AG04449 (cell line): ENCODE measurements at regions of chr1 and their contacts with region 1.

Region 1: DNA sequence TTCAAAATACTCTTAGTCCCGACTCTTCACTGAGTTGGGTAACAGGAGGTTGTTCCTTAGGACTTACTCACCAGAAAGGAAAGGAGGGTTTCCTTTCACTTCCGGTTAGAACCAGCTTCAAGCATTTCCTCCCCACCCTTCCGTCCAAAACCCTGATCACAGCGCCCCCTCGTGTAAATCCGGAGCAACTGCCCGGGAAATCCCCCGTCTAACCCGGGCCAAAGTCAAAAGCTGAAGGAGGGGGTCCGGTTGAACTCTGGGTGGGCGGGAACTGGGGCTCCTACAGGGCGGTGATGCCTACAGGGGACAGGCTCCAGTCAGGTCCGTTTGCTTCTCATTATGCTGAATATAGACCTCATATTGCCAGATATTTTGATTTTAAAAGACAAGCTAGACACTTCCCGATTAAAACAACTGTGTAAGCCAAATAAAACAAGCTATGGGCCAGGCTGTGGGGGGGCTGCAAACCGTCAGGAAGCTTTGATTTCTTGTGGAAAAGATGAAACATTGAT is 15.0 kb upstream of the MTARC2 start:
- DNase-seq: peak; percentile 56
- H3K4me3 ChIP-seq: no peak overlapping the region
- CTCF ChIP-seq: peak; percentile 71

Region 2: GRCh38 chr1:220281159-220281574 is 452.0 kb before region 1 on chr1:
- CTCF ChIA-PET with region 1: interaction called, 42 read pairs
- POLR2A ChIA-PET with region 1: no interaction called
- DNase-seq: no peak
- H3K4me3 ChIP-seq: no peak overlapping the region
- CTCF ChIP-seq: peak; percentile 44

Region 3: GRCh38 chr1:220294846-220295301 is 438.3 kb before region 1 on chr1:
- CTCF ChIA-PET with region 1: interaction called, 10 read pairs
- POLR2A ChIA-PET with region 1: no interaction called
- DNase-seq: no peak
- H3K4me3 ChIP-seq: no peak overlapping the region
- CTCF ChIP-seq: no peak

Region 4: DNA sequence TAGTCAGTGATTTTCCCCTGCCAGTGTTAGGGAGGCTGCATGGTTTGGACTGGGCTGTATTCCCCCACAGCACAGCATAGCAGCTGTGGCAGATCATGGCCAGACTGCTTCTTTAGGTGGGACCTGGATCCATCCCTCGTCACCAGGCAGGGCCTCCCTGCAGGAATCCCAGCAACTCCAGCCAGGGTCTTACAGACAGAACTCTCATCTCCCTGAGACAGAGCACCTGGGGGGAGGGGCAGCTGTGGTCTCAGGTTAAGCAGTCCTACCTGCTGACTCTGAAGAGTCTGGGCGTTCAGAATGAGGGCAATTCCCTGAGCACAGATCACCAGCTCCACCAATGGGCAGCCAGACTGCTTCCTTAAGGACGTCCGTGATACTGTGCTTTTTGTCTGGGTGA is 90.9 kb before region 1 on chr1:
- CTCF ChIA-PET with region 1: no interaction called
- POLR2A ChIA-PET with region 1: no interaction called
- DNase-seq: no peak
- H3K4me3 ChIP-seq: no peak overlapping the region
- CTCF ChIP-seq: no peak

Region 5: GRCh38 chr1:220680085-220680687 is 53.0 kb before region 1 on chr1:
- CTCF ChIA-PET with region 1: interaction called, 15 read pairs
- POLR2A ChIA-PET with region 1: no interaction called
- DNase-seq: no peak
- H3K4me3 ChIP-seq: no peak overlapping the region
- CTCF ChIP-seq: peak; percentile 70

Region 6: DNA sequence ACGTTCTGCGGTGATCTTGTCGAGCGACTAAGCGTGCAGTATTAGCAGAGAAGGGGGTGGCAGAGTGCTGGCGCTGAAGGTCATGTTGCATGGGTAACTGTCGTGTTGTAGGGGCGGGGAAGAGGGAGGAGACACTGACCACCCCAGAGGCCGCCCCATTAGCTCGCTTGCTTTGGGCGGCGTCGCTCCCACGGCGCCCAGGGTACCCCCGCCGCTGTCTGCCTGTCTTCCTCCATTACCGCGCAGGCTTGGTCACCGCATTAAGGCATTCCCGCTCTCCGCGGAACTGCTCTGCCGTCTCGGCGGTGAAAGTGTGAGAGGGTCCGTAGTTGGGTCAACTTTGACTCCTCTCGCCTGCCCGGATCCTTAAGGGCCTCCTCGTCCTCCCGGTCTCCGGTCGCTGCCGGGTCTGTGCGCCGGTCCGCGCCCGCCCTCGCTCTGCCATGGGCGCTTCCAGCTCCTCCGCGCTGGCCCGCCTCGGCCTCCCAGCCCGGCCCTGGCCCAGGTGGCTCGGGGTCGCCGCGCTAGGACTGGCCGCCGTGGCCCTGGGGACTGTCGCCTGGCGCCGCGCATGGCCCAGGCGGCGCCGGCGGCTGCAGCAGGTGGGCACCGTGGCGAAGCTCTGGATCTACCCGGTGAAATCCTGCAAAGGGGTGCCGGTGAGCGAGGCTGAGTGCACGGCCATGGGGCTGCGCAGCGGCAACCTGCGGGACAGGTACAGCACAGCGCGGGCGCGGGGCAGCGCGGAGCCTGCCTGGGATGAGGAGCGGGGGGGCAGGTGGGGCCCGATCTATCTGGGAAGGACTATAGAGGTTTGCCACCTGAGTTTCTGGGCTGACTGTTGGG is 15.2 kb after region 1 on chr1 and contains the start of gene MTARC2:
- CTCF ChIA-PET with region 1: interaction called, 36 read pairs
- POLR2A ChIA-PET with region 1: no interaction called
- DNase-seq: peak; percentile 10
- H3K4me3 ChIP-seq: peak within 1 kb of the TSS; percentile 72
- CTCF ChIP-seq: no peak